ENCODE measurements at regions of chr7 and their contacts with region 1.

Region 1: DNA sequence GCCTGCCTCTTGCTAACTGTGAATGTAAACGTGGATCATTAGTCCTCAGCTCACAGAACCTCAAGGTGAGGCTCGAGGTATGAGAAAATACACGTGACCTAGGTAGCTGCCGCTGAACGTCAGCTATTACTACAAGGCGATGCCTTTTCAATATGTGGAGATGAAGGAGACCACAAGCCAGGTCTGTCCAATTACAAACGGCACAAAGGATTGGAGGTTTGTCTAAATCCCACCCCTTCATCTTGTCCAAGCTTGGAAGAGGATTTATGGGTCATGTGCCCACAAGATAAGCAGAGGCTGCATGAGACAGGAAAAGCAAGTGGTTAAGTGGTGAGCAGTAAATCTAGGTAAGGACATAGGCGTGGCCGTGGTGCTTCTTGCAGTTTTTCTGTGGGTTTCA is 3.4 kb downstream of the H2BK1 start:
- DNase-seq: peak in 25 of 35 experiments; percentile 10 to 65 (median 23)
- ATAC-seq: peak; percentile 64 to 79 (median 76)
- H3K4me3 ChIP-seq: no peak overlapping the region
- H3K4me3 Mint-ChIP-seq: peak overlapping the region; percentile 22 to 52 (median 51)
- H3K27ac ChIP-seq: peak overlapping the region; percentile 89
- H3K27ac Mint-ChIP-seq: peak overlapping the region; percentile 90 to 91
- H3K4me1 ChIP-seq: peaks cover 3 to 43% of the 10 kb centered on the region in 2 experiments
- H3K4me1 Mint-ChIP-seq: peaks cover 27 to 42% (median 29%) of the 10 kb centered on the region in 3 donors
- H3K27me3 ChIP-seq: peaks cover 0 to 15% of the 10 kb centered on the region in 2 experiments
- H3K27me3 Mint-ChIP-seq: no peaks in the 10 kb centered on the region

Region 2: DNA sequence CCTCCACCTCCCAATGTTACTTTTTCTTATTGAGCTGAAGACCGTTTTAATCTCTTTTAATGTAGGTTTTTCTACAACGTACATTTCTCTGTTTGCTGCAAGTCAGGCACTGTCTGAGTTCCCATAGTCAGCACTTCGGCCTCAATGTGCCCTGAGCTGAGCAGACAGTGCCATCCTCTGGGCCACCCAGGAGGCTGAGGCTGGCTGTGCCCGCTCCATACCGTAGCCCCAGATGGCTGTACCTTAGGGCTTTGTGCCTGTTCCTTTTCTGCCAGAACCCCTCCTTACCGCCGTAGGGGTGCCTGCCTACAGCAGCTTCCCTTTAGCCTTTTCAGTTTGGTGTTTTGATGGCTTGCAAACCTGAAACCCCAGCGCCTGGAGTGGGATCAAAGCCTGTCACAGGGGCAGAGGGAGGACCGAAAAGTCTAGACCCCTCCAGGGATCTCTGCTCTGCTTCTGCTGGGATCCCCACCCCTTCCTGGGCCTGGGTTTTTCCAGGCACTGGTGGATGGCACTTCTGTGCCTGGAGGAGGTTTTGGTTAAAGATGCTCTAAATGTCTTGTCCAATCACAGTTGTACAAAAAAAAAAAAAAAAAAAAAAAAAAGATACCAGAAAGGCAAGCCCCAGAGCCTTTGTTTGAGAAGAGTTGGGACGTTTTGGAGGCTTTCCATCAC is 111.7 kb before region 1 on chr7:
- CTCF ChIA-PET with region 1: no interaction called
- POLR2A ChIA-PET with region 1: no interaction called
- DNase-seq: peak in 1 of 35 experiments; percentile 25
- ATAC-seq: peak in 1 of 4 experiments; percentile 50
- H3K4me3 ChIP-seq: no peak overlapping the region
- H3K4me3 Mint-ChIP-seq: no peak overlapping the region
- H3K27ac ChIP-seq: peak overlapping the region; percentile 29
- H3K27ac Mint-ChIP-seq: no peak overlapping the region
- H3K4me1 ChIP-seq: peaks cover 0 to 10% of the 10 kb centered on the region in 2 experiments
- H3K4me1 Mint-ChIP-seq: peaks cover 0 to 11% (median 8%) of the 10 kb centered on the region in 3 donors
- H3K27me3 ChIP-seq: peaks cover 0 to 1% of the 10 kb centered on the region in 2 experiments
- H3K27me3 Mint-ChIP-seq: no peaks in the 10 kb centered on the region

Region 3: GRCh38 chr7:151226875-151227782 is 20.2 kb after region 1 on chr7 and contains the start of gene ABCF2:
- CTCF ChIA-PET with region 1: interaction called in 1 of 2 experiments, 11 read pairs
- POLR2A ChIA-PET with region 1: interaction called in 1 of 2 experiments, 5 read pairs
- DNase-seq: peak; percentile 95 to 99 (median 97)
- ATAC-seq: peak; percentile 99
- H3K4me3 ChIP-seq: peak within 1 kb of the TSS; percentile 85 to 87
- H3K4me3 Mint-ChIP-seq: peak within 1 kb of the TSS; percentile 94 to 99 (median 97)
- H3K27ac ChIP-seq: peak within 1 kb of the TSS; percentile 66
- H3K27ac Mint-ChIP-seq: peak within 1 kb of the TSS; percentile 93 to 96
- H3K4me1 ChIP-seq: peaks cover 15 to 29% of the 10 kb centered on the region in 2 experiments
- H3K4me1 Mint-ChIP-seq: peaks cover 50 to 53% (median 52%) of the 10 kb centered on the region in 3 donors
- H3K27me3 ChIP-seq: no peaks in the 10 kb centered on the region
- H3K27me3 Mint-ChIP-seq: no peaks in the 10 kb centered on the region
- total RNA-seq, gene ABCF2: 22.9 to 39.7 (median 38.8) TPM